B cell (primary cell): ENCODE measurements at regions of chr5 and their contacts with region 1.

Region 1: GRCh38 chr5:126707080-126707479 is 69.9 kb upstream of the LMNB1 start:
- DNase-seq: no peak
- ATAC-seq: no peak
- H3K4me3 ChIP-seq: no peak overlapping the region
- H3K4me3 Mint-ChIP-seq: no peak overlapping the region
- H3K27ac ChIP-seq: no peak overlapping the region
- H3K27ac Mint-ChIP-seq: no peak overlapping the region
- H3K4me1 ChIP-seq: no peaks in the 10 kb centered on the region
- H3K4me1 Mint-ChIP-seq: no peaks in the 10 kb centered on the region
- H3K27me3 ChIP-seq: no peaks in the 10 kb centered on the region
- H3K27me3 Mint-ChIP-seq: no peaks in the 10 kb centered on the region
- CTCF ChIP-seq: no peak

Region 2: GRCh38 chr5:126519634-126520592 is 187.2 kb before region 1 on chr5:
- CTCF ChIA-PET with region 1: no interaction called
- POLR2A ChIA-PET with region 1: no interaction called
- intact Hi-C with region 1: no loop called
- DNase-seq: no peak
- ATAC-seq: no peak
- H3K4me3 ChIP-seq: no peak overlapping the region
- H3K4me3 Mint-ChIP-seq: no peak overlapping the region
- H3K27ac ChIP-seq: no peak overlapping the region
- H3K27ac Mint-ChIP-seq: no peak overlapping the region
- H3K4me1 ChIP-seq: no peaks in the 10 kb centered on the region
- H3K4me1 Mint-ChIP-seq: no peaks in the 10 kb centered on the region
- H3K27me3 ChIP-seq: no peaks in the 10 kb centered on the region
- H3K27me3 Mint-ChIP-seq: no peaks in the 10 kb centered on the region
- CTCF ChIP-seq: no peak

Region 3: DNA sequence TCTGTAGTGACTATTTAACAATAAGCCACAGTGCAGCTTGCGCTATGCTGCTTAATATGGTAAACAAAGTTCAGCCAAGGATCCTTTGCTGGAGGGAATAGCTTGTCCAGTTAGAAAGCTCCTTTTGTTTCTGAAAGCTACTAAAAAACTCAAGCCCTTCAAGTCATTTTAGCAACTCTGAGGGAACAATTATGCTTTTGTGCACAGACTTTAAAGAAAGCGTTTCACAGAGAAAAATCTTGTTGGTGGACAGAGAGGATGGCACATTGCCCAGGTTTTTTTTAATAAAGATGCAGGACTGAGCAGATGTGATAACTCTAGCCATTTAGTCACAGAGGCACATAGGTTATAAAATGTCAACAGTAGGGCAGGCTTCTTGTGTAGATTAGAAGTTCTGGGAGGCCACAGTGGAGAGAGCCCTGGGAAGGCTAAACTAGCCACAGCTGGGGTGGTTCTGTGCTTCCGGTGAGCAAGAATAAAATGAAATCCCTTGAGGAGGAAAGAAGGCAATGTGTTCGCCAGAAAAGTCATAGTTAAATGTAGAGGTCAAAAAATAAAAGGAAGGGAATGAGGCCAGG is 175.4 kb before region 1 on chr5:
- CTCF ChIA-PET with region 1: no interaction called
- POLR2A ChIA-PET with region 1: no interaction called
- intact Hi-C with region 1: no loop called
- DNase-seq: no peak
- ATAC-seq: no peak
- H3K4me3 ChIP-seq: no peak overlapping the region
- H3K4me3 Mint-ChIP-seq: no peak overlapping the region
- H3K27ac ChIP-seq: no peak overlapping the region
- H3K27ac Mint-ChIP-seq: no peak overlapping the region
- H3K4me1 ChIP-seq: no peaks in the 10 kb centered on the region
- H3K4me1 Mint-ChIP-seq: no peaks in the 10 kb centered on the region
- H3K27me3 ChIP-seq: peaks cover 0 to 7% (median 0%) of the 10 kb centered on the region in 4 experiments
- H3K27me3 Mint-ChIP-seq: peaks cover 6% of the 10 kb centered on the region
- CTCF ChIP-seq: no peak

Region 4: GRCh38 chr5:126686451-126687126 is 20.5 kb before region 1 on chr5:
- CTCF ChIA-PET with region 1: no interaction called
- POLR2A ChIA-PET with region 1: interaction called, 11 read pairs
- intact Hi-C with region 1: no loop called
- DNase-seq: no peak
- ATAC-seq: no peak
- H3K4me3 ChIP-seq: no peak overlapping the region
- H3K4me3 Mint-ChIP-seq: no peak overlapping the region
- H3K27ac ChIP-seq: no peak overlapping the region
- H3K27ac Mint-ChIP-seq: no peak overlapping the region
- H3K4me1 ChIP-seq: no peaks in the 10 kb centered on the region
- H3K4me1 Mint-ChIP-seq: peaks cover 12% of the 10 kb centered on the region
- H3K27me3 ChIP-seq: no peaks in the 10 kb centered on the region
- H3K27me3 Mint-ChIP-seq: no peaks in the 10 kb centered on the region
- CTCF ChIP-seq: no peak